AG04450 (cell line): ENCODE measurements at regions of chr6 and their contacts with region 1.

Region 1: DNA sequence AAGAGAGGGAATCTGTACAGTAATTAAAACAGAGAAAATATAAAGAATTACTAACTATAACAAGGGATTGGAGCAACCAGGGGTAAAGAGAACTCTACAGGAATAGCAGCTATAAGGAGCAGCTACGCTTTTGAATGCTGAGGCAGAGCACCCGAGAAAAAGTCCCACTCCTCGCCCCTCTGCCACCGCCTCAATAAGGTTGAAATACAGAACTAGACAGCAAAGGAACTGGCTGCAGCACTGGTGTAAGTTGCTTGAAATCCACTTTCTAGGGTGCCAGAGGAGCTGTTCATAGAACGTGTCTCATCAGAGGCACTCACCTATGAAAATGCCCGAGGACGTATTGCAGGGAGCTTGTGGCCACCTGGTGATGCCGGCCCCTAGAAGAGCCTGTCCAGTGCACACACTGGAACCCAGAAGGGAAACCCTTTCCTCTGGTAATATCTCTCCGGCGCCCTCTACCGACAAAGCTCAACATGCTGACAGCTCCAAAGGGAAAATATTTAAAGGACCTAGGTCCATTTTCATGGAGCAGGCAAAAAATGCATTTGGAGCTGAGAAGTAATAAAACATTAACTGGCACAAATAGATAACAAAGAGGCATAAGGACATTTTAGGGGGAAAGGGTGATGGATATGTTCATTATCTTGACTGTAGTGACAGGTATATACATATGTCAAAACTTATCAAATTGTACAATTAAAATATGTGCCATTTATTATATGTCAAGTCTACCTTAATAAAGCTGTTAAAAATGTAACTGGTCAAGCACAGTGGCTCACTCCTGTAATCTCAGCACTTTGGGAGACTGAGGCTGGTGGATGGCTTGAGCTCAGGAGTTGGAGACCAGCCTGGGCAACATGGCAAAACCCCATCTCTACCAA is 137.4 kb upstream of the HDAC2 start:
- DNase-seq: peak; percentile 34
- H3K4me3 ChIP-seq: no peak overlapping the region
- H3K27ac ChIP-seq: no peak overlapping the region
- H3K27me3 ChIP-seq: no peaks in the 10 kb centered on the region
- CTCF ChIP-seq: peak; percentile 88

Region 2: DNA sequence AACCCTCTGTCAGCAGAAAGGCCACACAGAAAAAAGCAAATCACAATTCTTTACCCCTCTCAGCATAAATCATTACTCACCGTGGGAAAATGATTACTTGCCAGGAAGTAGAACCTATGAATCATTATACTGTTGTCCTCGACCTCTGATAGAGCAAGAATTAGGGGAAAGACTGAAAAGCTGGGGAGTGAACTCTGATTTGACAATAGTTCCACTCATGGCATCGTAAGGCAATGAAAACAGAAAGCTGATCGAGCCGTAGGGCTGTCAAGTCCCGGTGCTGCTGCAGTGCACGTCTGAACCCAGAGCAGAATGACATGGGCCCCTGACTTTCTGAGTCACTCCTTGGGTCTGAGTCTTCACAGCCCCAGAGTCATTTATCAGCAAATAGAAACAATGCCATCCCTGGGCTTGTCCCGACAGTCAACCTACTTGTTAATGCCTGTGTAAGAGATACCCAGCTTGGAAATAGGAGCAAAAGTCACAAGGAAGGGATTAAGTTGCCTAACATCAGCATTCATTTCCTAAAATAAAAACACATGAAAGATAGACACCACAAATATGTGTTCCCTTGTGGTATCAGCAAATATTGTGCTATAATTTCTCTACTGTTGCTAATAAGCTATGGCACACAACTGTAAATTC is 476.0 kb before region 1 on chr6:
- CTCF ChIA-PET with region 1: no interaction called
- POLR2A ChIA-PET with region 1: no interaction called
- DNase-seq: no peak
- H3K4me3 ChIP-seq: peak overlapping the region; percentile 37
- H3K27ac ChIP-seq: peak overlapping the region; percentile 55
- H3K27me3 ChIP-seq: no peaks in the 10 kb centered on the region
- CTCF ChIP-seq: no peak

Region 3: GRCh38 chr6:113994918-113995342 is 113.4 kb before region 1 on chr6:
- CTCF ChIA-PET with region 1: interaction called, 232 read pairs
- POLR2A ChIA-PET with region 1: interaction called, 5 read pairs
- DNase-seq: peak; percentile 80
- H3K4me3 ChIP-seq: no peak overlapping the region
- H3K27ac ChIP-seq: peak overlapping the region; percentile 63
- H3K27me3 ChIP-seq: no peaks in the 10 kb centered on the region
- CTCF ChIP-seq: peak; percentile 88

Region 4: GRCh38 chr6:114042267-114043016 is 65.9 kb before region 1 on chr6:
- CTCF ChIA-PET with region 1: interaction called, 14 read pairs
- POLR2A ChIA-PET with region 1: no interaction called
- DNase-seq: no peak
- H3K4me3 ChIP-seq: no peak overlapping the region
- H3K27ac ChIP-seq: no peak overlapping the region
- H3K27me3 ChIP-seq: no peaks in the 10 kb centered on the region
- CTCF ChIP-seq: no peak

Region 5: DNA sequence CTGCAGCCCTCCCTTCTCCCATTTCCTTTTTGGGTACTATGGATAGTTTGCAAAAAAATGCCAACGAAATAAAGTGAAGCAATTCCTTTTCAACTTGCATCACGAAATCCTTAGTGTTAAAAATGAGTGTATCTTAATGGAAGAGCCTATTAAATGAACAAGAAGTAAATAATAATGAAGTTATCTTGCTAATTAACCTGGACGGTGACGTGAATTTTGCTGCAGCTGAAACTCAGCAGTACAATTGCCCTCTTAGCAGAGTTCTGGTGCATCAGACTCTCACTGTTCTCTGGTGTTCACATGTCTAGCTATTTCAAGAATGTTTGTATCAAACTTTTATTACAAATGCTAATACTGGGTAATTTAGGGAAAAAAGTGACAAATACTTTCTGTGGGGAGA is 17.7 kb before region 1 on chr6:
- CTCF ChIA-PET with region 1: interaction called, 17 read pairs
- POLR2A ChIA-PET with region 1: no interaction called
- DNase-seq: no peak
- H3K4me3 ChIP-seq: no peak overlapping the region
- H3K27ac ChIP-seq: no peak overlapping the region
- H3K27me3 ChIP-seq: no peaks in the 10 kb centered on the region
- CTCF ChIP-seq: no peak

Region 6: GRCh38 chr6:114135363-114135992 is 27.1 kb after region 1 on chr6:
- CTCF ChIA-PET with region 1: interaction called, 11 read pairs
- POLR2A ChIA-PET with region 1: no interaction called
- DNase-seq: no peak
- H3K4me3 ChIP-seq: no peak overlapping the region
- H3K27ac ChIP-seq: no peak overlapping the region
- H3K27me3 ChIP-seq: peaks cover 5% of the 10 kb centered on the region
- CTCF ChIP-seq: no peak

Region 7: DNA sequence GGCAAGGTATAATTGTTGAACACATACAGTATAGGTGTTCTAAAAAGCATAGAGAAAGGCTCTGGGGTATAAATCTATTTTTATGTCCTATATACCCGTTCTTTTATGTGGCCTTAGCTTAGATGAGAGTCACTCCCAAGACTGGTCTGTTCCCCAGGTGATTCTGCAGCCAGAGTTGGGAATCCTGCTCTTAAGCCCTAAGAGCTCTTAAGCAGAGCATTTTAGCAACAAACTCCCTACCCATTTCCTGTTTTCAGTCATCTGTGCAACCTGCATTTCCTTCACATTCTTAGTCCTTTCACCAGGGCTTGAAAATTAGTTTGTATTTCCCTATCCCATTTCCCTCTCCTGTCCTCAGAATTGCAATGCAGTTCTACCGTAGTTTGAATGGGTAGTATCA is 68.4 kb after region 1 on chr6:
- CTCF ChIA-PET with region 1: no interaction called
- POLR2A ChIA-PET with region 1: no interaction called
- DNase-seq: no peak
- H3K4me3 ChIP-seq: no peak overlapping the region
- H3K27ac ChIP-seq: no peak overlapping the region
- H3K27me3 ChIP-seq: no peaks in the 10 kb centered on the region
- CTCF ChIP-seq: no peak